Ascending aorta (tissue), 2 donors: ENCODE measurements at regions of chr3 and their contacts with region 1.

Region 1: GRCh38 chr3:70989174-70989573 is 594.4 kb downstream of the FOXP1 start:
- DNase-seq: no peak
- H3K4me3 ChIP-seq: peak overlapping the region in 1 of 2 donors; percentile 8
- H3K27ac ChIP-seq: peak overlapping the region; percentile 79 to 82
- H3K4me1 ChIP-seq: peaks cover 14 to 85% of the 10 kb centered on the region in 2 donors
- H3K27me3 ChIP-seq: no peaks in the 10 kb centered on the region
- CTCF ChIP-seq: no peak

Region 2: DNA sequence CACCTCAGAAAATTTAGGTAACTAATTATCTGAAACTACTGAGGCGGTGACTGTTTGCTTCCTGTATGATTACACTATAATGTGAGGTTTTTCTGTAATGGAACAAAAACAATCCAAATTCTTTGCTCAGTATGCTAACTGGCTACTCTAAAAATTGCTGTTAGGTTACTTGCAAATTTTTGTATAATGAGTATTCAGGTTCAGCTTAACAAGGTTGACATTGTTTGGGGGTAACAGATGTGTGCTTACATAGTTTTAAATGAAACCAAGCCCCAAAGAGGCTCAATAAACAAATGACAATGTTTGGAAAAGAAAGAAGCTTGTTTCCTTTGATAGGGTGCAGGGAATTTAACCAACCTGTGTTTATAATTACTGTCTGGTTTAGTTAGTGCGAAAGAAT is 262.2 kb before region 1 on chr3:
- intact Hi-C with region 1: no loop called
- DNase-seq: no peak
- H3K4me3 ChIP-seq: no peak overlapping the region
- H3K27ac ChIP-seq: no peak overlapping the region
- H3K4me1 ChIP-seq: peaks cover 0 to 5% of the 10 kb centered on the region in 2 donors
- H3K27me3 ChIP-seq: no peaks in the 10 kb centered on the region
- CTCF ChIP-seq: no peak

Region 3: GRCh38 chr3:71057526-71057894 is 68.3 kb after region 1 on chr3:
- intact Hi-C with region 1: loop called (anchors 5 kb)
- DNase-seq: no peak
- H3K4me3 ChIP-seq: peak overlapping the region in 1 of 2 donors; percentile 53
- H3K27ac ChIP-seq: peak overlapping the region; percentile 95 to 98
- H3K4me1 ChIP-seq: peaks cover 14 to 58% of the 10 kb centered on the region in 2 donors
- H3K27me3 ChIP-seq: no peaks in the 10 kb centered on the region
- CTCF ChIP-seq: no peak

Region 4: DNA sequence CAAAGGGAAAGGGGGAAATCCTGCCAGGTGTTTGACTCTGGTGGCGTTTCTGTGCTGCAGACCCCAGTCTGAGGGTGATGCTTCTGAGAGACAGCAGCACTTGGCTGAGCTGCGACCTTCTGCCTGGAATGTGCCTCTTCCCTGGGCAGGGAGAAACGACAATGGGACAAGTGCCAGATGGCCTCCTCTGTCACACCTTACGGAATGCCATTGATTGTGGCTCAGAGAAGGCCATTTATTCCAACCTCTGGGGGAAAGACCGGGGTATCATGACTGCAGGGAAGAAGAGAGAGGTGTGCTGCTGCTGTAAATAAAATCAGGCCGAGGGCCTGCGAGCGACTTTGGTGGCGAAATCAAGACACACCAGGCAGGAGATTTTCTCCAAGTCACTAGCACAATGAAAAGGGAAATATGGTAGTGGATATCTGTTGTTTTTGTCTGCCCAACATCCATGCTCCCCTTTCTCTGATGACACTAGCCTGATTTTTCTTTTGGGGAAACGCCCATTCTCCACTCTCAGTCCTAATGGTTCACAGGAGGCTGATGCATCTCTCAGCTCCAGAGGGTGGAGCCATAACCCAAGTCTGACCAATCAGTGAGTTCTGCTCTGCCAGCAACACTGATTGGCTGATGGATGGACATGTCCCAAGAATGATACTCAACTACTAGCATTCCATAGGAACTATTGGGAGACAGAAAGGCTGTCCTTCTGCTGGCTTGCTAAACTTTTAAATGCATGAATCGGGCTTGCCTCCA is 258.2 kb after region 1 on chr3:
- intact Hi-C with region 1: loop called (anchors 5 kb)
- DNase-seq: peak in 1 of 2 donors; percentile 58
- H3K4me3 ChIP-seq: no peak overlapping the region
- H3K27ac ChIP-seq: peak overlapping the region; percentile 69 to 86
- H3K4me1 ChIP-seq: peaks cover 0 to 21% of the 10 kb centered on the region in 2 donors
- H3K27me3 ChIP-seq: no peaks in the 10 kb centered on the region
- CTCF ChIP-seq: no peak